Breast epithelium (tissue), 4 donors: ENCODE measurements at regions of chr3 and their contacts with region 1.

Region 1: GRCh38 chr3:173044998-173045397 is 96.0 kb downstream of the SPATA16 start:
- DNase-seq: no peak
- H3K4me3 ChIP-seq: no peak overlapping the region
- H3K27ac ChIP-seq: no peak overlapping the region
- H3K4me1 ChIP-seq: no peaks in the 10 kb centered on the region
- H3K27me3 ChIP-seq: no peaks in the 10 kb centered on the region
- CTCF ChIP-seq: no peak
- POLR2A ChIP-seq: no peak

Region 2: DNA sequence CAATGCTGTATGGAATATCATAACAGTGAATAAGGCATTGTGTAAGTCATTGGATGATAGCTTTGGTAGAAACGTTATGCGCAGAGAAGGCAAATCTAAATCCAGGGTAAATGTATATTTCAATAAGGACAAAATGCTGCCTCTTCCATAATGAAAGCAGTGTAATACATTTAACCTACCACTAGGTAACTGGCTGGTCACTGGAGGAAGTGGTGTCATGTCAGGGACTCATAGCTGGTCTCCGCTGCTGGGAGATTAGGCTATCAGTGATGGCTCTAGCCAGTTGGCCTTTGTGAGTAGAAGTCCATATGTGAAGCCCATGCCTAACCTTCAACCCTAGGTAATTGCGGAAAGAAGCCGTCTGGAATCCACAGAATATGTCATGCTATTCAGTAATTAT is 493.4 kb after region 1 on chr3:
- intact Hi-C with region 1: loop called (anchors 5 kb)
- DNase-seq: no peak
- H3K4me3 ChIP-seq: no peak overlapping the region
- H3K27ac ChIP-seq: no peak overlapping the region
- H3K4me1 ChIP-seq: no peaks in the 10 kb centered on the region
- H3K27me3 ChIP-seq: no peaks in the 10 kb centered on the region
- CTCF ChIP-seq: no peak
- POLR2A ChIP-seq: no peak